ENCODE measurements at regions of chr4 and their contacts with region 1.

Region 1: GRCh38 chr4:158094413-158095134 is 78.3 kb downstream of the GASK1B start:
- DNase-seq: peak; percentile 93
- ATAC-seq: peak; percentile 91
- H3K4me3 ChIP-seq: peak overlapping the region; percentile 42; the same call in 1 of the 2 replicates
- H3K27ac ChIP-seq: peak overlapping the region; percentile 86
- H3K4me1 ChIP-seq: peaks cover 39% of the 10 kb centered on the region
- H3K27me3 ChIP-seq: no peaks in the 10 kb centered on the region
- CTCF ChIP-seq: no peak

Region 2: DNA sequence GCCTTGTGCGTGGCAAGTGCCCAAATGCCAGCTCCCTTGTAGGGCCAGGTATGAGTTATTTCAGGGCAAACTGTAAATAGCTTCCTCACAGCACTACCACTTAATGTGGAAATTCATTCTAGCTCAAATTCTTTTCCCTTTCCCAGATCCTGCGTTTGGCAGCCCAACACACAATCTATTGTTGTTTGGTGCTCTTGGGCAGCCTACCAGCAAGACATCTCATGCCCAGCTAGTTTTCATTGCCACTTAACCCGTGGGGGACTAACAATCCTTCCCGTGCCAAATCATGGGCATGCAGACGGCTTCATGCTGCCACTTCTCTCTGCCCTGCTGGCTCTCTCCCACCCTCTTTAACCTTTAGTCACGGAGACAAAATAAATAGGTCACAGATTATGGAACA is 419.9 kb before region 1 on chr4:
- CTCF ChIA-PET with region 1: no interaction called
- POLR2A ChIA-PET with region 1: no interaction called
- intact Hi-C with region 1: no loop called
- DNase-seq: no peak
- ATAC-seq: no peak
- H3K4me3 ChIP-seq: no peak overlapping the region
- H3K27ac ChIP-seq: no peak overlapping the region
- H3K4me1 ChIP-seq: no peaks in the 10 kb centered on the region
- H3K27me3 ChIP-seq: no peaks in the 10 kb centered on the region
- CTCF ChIP-seq: no peak

Region 3: GRCh38 chr4:157713342-157713741 is 381.2 kb before region 1 on chr4:
- CTCF ChIA-PET with region 1: no interaction called
- POLR2A ChIA-PET with region 1: no interaction called
- intact Hi-C with region 1: no loop called
- DNase-seq: peak; percentile 39
- ATAC-seq: peak; percentile 73
- H3K4me3 ChIP-seq: no peak overlapping the region
- H3K27ac ChIP-seq: no peak overlapping the region
- H3K4me1 ChIP-seq: no peaks in the 10 kb centered on the region
- H3K27me3 ChIP-seq: no peaks in the 10 kb centered on the region
- CTCF ChIP-seq: no peak

Region 4: GRCh38 chr4:157999743-158000142 is 94.8 kb before region 1 on chr4:
- CTCF ChIA-PET with region 1: interaction called, 3 read pairs
- POLR2A ChIA-PET with region 1: no interaction called
- intact Hi-C with region 1: loop called (anchors 2 kb)
- DNase-seq: peak; percentile 58
- ATAC-seq: peak; percentile 91
- H3K4me3 ChIP-seq: no peak overlapping the region
- H3K27ac ChIP-seq: no peak overlapping the region
- H3K4me1 ChIP-seq: peaks cover 17% of the 10 kb centered on the region
- H3K27me3 ChIP-seq: no peaks in the 10 kb centered on the region
- CTCF ChIP-seq: no peak

Region 5: GRCh38 chr4:158020176-158020575 is 74.4 kb before region 1 on chr4:
- CTCF ChIA-PET with region 1: no interaction called
- POLR2A ChIA-PET with region 1: no interaction called
- intact Hi-C with region 1: loop called (anchors 10 kb)
- DNase-seq: peak; percentile 75
- ATAC-seq: peak; percentile 77
- H3K4me3 ChIP-seq: 0 out of 2 replicates have a peak overlapping the region, but pooled peaks have one; percentile 6
- H3K27ac ChIP-seq: peak overlapping the region; percentile 60
- H3K4me1 ChIP-seq: peaks cover 33% of the 10 kb centered on the region
- H3K27me3 ChIP-seq: no peaks in the 10 kb centered on the region
- CTCF ChIP-seq: no peak

Region 6: DNA sequence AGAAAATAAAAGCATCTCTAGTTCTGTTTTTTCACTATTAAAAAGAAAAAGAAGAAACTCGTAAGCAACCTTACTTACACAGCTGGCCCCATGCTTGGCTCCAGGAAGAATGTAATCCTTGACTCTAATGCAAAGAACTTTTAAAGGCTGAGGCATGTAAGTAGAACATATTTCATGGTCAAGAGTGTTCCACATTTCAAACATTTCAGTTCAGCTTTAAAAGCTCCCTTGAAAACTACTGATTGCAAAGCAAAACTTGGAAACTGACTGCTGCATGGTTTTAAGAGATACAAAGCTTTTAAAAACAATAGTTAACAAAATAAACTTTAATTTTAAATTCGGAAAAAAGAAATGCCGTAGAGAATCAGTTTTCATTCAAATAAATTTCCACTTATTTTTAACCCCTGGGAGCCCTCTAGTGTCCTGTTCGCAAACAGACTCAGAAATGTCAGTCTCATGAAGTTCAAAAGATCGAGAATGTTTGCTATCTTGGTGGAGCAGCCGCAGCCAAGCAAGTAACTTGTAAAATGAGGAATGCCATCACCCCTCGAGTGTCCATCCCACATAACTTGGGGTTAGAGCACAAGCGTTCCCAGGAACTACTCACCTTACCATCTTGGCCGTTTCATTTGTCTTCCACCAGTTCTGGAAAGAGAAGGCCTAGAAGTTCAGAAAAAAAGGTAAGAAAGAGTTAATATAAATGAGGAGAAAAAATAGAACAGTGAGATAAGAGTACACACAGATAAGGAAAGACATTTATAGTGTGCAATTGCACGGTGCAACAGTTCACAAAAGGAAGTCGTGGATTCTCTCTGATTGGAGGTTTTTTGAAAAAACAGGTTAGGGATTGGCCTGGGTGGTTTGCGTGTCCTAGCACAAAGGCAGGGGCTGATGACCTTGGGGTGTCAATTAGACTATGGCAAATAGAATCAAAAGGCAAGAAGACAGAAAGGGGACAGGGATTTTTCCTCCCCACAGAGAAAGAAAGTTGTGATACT is 78.0 kb after region 1 on chr4 and contains the start of gene GASK1B:
- CTCF ChIA-PET with region 1: interaction called, 6 read pairs
- POLR2A ChIA-PET with region 1: interaction called, 4 read pairs
- intact Hi-C with region 1: loop called (anchors 1 kb)
- DNase-seq: peak; percentile 70
- ATAC-seq: peak; percentile 10; the same call in 1 of the 2 replicates
- H3K4me3 ChIP-seq: peak within 1 kb of the TSS; percentile 66
- H3K27ac ChIP-seq: no peak within 1 kb of the TSS
- H3K4me1 ChIP-seq: peaks cover 28% of the 10 kb centered on the region
- H3K27me3 ChIP-seq: no peaks in the 10 kb centered on the region
- CTCF ChIP-seq: peak; percentile 78
- total RNA-seq, gene GASK1B: 0.46 and 0.51 TPM in 2 replicates

Region 7: GRCh38 chr4:158371158-158371557 is 276.6 kb after region 1 on chr4:
- CTCF ChIA-PET with region 1: no interaction called
- POLR2A ChIA-PET with region 1: no interaction called
- intact Hi-C with region 1: loop called (anchors 10 kb)
- DNase-seq: peak; percentile 50
- ATAC-seq: peak; percentile 72
- H3K4me3 ChIP-seq: no peak overlapping the region
- H3K27ac ChIP-seq: peak overlapping the region; percentile 80
- H3K4me1 ChIP-seq: peaks cover 29% of the 10 kb centered on the region
- H3K27me3 ChIP-seq: no peaks in the 10 kb centered on the region
- CTCF ChIP-seq: no peak

Region 8: DNA sequence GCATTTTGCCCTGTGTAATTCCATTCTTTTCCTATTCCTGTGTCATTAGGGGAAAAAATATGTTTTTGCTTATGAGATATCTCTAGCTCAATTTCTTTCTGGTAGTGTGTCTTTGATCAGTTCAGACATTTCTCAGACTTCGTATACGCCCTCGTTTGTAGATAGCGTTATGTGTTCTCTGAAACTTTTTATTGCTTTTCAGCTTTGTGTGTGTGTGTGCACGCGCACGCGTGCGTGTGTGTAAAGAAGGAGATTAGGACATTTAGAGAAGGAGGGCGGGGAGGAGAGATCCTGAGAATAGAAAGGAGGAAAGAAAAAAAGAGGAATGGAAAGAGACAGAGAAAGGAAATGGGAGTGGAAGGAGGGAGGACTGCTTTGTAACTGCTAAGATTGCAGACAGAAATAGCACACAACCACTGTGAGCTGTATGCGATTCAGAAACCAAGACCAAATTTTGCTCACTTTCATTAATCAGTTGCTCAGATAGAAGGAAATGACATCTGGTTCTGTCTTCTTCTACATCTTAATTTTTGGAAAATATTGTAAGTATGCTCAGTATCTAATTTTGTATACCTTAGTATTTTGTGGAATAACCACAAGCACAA is 427.0 kb after region 1 on chr4 and contains the start of gene RXFP1:
- CTCF ChIA-PET with region 1: no interaction called
- POLR2A ChIA-PET with region 1: no interaction called
- intact Hi-C with region 1: loop called (anchors 10 kb)
- DNase-seq: no peak
- ATAC-seq: no peak
- H3K4me3 ChIP-seq: no peak within 1 kb of the TSS
- H3K27ac ChIP-seq: no peak within 1 kb of the TSS
- H3K4me1 ChIP-seq: peaks cover 33% of the 10 kb centered on the region
- H3K27me3 ChIP-seq: no peaks in the 10 kb centered on the region
- CTCF ChIP-seq: no peak
- total RNA-seq, gene RXFP1: not detected in 2 replicates